CD8-positive, alpha-beta T cell (primary cell): ENCODE measurements at regions of chr2 and their contacts with region 1.

Region 1: DNA sequence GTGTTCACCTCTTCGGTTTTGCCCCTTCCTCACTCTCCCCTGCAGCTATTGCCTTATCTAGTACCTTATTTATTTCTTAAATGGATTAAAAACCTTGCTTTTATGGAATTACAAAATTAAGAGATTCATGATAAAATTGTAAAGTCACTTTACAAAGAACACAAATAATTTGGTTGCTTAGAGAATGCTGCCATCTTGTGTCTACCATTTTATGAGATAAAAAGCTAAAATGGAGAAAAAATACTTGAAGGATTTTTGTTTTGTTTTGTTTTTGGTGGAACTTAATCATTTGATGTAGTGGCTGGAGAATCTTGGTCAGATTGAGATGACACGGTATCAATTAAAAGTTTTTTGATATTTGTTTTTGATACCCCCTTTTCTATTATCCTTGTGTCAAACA is 69.6 kb downstream of the R3HDM1 start:
- DNase-seq: peak in 2 of 9 experiments; percentile 18 to 37
- ATAC-seq: no peak
- H3K4me3 ChIP-seq: no peak overlapping the region
- H3K4me3 Mint-ChIP-seq: no peak overlapping the region
- H3K27ac ChIP-seq: no peak overlapping the region
- H3K27ac Mint-ChIP-seq: no peak overlapping the region
- H3K4me1 ChIP-seq: no peaks in the 10 kb centered on the region
- H3K4me1 Mint-ChIP-seq: peaks cover 11% of the 10 kb centered on the region
- H3K27me3 ChIP-seq: no peaks in the 10 kb centered on the region
- H3K27me3 Mint-ChIP-seq: no peaks in the 10 kb centered on the region
- CTCF ChIP-seq: peak; percentile 46

Region 2: GRCh38 chr2:134988994-134989605 is 611.8 kb before region 1 on chr2:
- CTCF ChIA-PET with region 1: no interaction called
- POLR2A ChIA-PET with region 1: no interaction called
- intact Hi-C with region 1: loop called in 1 of 2 experiments (anchors 5 kb)
- DNase-seq: peak in 2 of 9 experiments; percentile 33 to 49
- ATAC-seq: peak; percentile 40
- H3K4me3 ChIP-seq: no peak overlapping the region
- H3K4me3 Mint-ChIP-seq: no peak overlapping the region
- H3K27ac ChIP-seq: no peak overlapping the region
- H3K27ac Mint-ChIP-seq: no peak overlapping the region
- H3K4me1 ChIP-seq: no peaks in the 10 kb centered on the region
- H3K4me1 Mint-ChIP-seq: peaks cover 3% of the 10 kb centered on the region
- H3K27me3 ChIP-seq: peaks cover 0 to 2% of the 10 kb centered on the region in 2 experiments
- H3K27me3 Mint-ChIP-seq: peaks cover 7% of the 10 kb centered on the region
- CTCF ChIP-seq: peak; percentile 40

Region 3: GRCh38 chr2:135424839-135425238 is 176.1 kb before region 1 on chr2:
- CTCF ChIA-PET with region 1: no interaction called
- POLR2A ChIA-PET with region 1: no interaction called
- intact Hi-C with region 1: no loop called
- DNase-seq: no peak
- ATAC-seq: no peak
- H3K4me3 ChIP-seq: no peak overlapping the region
- H3K4me3 Mint-ChIP-seq: no peak overlapping the region
- H3K27ac ChIP-seq: no peak overlapping the region
- H3K27ac Mint-ChIP-seq: no peak overlapping the region
- H3K4me1 ChIP-seq: no peaks in the 10 kb centered on the region
- H3K4me1 Mint-ChIP-seq: no peaks in the 10 kb centered on the region
- H3K27me3 ChIP-seq: no peaks in the 10 kb centered on the region
- H3K27me3 Mint-ChIP-seq: no peaks in the 10 kb centered on the region
- CTCF ChIP-seq: no peak